ENCODE measurements at regions of chr17 and their contacts with region 1.

Region 1: GRCh38 chr17:78745407-78746088 is 36.5 kb downstream of the CYTH1 start:
- DNase-seq: no peak
- H3K4me3 Mint-ChIP-seq: peak overlapping the region; percentile 53
- H3K27ac Mint-ChIP-seq: peak overlapping the region; percentile 75
- H3K4me1 Mint-ChIP-seq: peaks cover 85% of the 10 kb centered on the region
- H3K27me3 Mint-ChIP-seq: no peaks in the 10 kb centered on the region

Region 2: DNA sequence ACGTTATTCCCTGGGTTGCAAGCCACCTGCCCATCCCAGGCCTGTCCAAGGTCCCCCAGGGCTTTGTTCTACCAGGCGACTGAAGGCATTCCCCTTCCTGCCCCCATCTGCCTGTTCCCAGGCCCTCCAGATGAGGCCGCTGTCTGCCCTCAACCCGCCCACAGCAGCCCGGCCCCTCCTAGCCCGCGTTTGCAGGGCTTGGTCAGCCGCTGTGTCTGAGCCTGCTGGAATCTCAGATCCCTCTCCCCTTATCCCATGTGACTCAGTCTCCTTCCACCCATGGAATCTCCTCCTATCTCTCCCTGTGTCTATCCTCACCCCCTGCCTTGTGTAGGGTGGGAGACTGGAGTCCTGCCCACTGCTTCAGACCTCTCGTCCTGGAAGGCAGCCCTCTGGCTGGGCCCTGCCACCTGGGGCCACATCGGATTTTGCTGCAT is 973.1 kb before region 1 on chr17:
- intact Hi-C with region 1: no loop called
- DNase-seq: peak; percentile 45
- H3K4me3 Mint-ChIP-seq: no peak overlapping the region
- H3K27ac Mint-ChIP-seq: no peak overlapping the region
- H3K4me1 Mint-ChIP-seq: no peaks in the 10 kb centered on the region
- H3K27me3 Mint-ChIP-seq: peaks cover 30% of the 10 kb centered on the region

Region 3: DNA sequence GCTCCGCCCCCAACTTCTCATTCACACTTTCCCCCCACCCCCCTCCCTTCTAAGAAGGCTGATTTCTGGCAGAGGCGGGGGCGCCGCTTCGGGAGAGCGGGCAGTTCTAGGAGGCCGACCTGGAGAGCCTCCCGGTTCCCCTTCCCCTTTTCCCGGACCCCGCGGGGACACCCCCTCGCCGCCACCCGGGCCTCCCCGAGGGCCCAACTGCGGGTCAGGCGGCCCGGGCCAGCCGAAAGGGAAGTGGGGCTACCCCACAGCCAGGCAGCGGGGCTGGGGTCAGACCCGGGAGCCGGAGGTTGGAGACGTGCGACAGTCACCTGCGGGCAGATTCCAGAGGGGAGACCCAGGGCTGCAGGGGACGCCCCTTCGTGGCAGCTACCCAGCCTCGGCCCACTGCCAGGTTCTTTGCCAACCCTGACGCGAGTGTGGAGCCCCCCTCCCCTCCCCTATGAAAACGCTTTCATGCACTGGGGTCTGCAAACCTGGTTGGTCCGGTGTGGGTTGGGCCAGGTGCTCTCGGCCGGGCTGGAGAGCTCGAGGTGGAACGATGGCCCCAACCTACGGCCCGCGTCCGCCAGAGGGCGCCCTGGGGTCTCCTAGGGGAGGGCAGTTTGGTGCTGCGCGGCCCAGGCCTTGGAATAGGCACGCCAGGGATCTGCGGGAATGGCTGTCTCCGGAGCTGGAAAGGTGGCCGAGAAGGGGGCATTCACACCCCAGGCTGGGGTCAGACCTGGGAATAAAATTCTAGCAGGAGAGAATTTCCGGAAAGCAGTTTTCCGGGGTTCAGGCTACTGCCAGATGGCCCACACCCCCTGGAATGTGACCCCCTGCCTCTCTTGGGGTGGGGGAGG is 384.9 kb before region 1 on chr17:
- intact Hi-C with region 1: loop called (anchors 1 kb)
- DNase-seq: peak; percentile 87
- H3K4me3 Mint-ChIP-seq: peak overlapping the region; percentile 79
- H3K27ac Mint-ChIP-seq: peak overlapping the region; percentile 85
- H3K4me1 Mint-ChIP-seq: peaks cover 48% of the 10 kb centered on the region
- H3K27me3 Mint-ChIP-seq: no peaks in the 10 kb centered on the region

Region 4: DNA sequence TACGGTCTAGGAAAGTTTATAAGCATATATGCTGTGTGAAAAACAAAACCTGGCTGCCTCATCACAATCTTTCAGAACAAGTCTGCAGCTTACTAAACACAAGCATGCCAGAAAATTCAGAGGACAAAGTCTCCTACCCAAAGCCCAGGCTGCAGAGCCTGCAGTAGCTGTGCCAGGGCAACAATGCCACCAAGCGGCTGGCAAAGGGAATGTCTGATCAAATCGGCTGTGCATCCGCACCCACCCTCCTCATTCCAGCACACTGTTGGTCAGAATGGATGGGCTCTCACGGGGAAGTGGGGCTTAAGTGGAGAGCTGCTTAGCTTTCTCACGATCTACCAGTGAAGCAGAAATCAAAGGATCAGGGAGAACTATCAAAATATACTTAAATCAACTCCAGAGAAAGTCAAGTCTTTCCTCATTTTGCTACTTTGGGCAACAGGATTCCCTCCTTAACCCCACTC is 37.0 kb before region 1 on chr17:
- intact Hi-C with region 1: loop called (anchors 1 kb)
- DNase-seq: peak; percentile 35
- H3K4me3 Mint-ChIP-seq: peak overlapping the region; percentile 55
- H3K27ac Mint-ChIP-seq: peak overlapping the region; percentile 84
- H3K4me1 Mint-ChIP-seq: peaks cover 56% of the 10 kb centered on the region
- H3K27me3 Mint-ChIP-seq: no peaks in the 10 kb centered on the region

Region 5: GRCh38 chr17:78759203-78759968 is 13.8 kb after region 1 on chr17:
- intact Hi-C with region 1: loop called (anchors 1 kb)
- DNase-seq: peak; percentile 61
- H3K4me3 Mint-ChIP-seq: peak overlapping the region; percentile 61
- H3K27ac Mint-ChIP-seq: peak overlapping the region; percentile 91
- H3K4me1 Mint-ChIP-seq: peaks cover 65% of the 10 kb centered on the region
- H3K27me3 Mint-ChIP-seq: no peaks in the 10 kb centered on the region

Region 6: DNA sequence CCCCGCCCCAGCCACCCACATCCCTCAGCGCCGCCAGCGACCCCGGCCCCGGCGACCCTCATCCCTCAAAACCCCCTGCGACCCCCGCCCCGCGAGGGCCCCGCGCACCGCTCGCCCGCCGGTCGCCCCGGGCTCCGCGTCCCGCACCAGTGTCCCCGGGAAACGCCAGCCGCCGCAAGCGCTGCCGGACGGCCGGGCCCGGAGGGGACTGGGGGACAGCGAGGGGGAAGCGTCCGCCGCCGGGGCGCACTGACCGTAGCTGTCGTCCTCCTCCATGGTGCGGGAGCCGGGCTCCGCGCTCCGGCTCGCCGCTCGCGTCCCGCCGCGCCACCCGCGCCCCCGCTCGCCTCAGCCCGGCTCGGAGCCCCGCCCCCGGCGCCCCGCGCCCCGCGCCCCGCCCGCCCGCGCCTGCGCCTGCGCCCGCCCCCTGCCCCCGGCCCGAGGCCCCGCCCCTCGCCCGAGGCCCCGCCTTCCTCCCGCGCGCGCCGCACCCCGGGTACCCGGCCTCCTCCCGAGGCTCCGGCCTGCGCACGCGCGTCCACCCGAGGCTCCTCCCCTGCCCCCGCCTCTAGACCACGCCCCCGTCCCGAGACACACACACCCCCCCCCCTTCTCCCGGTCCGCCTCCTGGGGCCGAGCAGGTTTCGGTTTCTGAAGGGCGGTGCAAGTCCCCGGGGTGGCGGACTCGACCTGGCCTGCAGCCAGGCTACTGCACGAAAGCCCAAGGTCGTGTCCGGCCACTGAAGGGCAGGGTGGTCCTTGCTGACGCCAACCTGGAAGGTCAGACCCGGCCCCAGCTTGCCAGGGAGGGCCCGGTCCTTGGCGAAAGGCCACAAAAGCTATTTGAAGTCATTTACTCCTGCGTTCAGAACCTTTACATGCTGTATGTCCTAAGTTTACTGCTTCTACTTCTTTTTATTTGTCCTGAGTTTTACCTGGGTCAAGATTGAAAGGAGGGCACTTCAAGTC is 36.7 kb after region 1 on chr17 and contains the start of gene CYTH1:
- intact Hi-C with region 1: loop called (anchors 1 kb)
- DNase-seq: peak; percentile 96
- H3K4me3 Mint-ChIP-seq: peak within 1 kb of the TSS; percentile 90
- H3K27ac Mint-ChIP-seq: peak within 1 kb of the TSS; percentile 91
- H3K4me1 Mint-ChIP-seq: peaks cover 51% of the 10 kb centered on the region
- H3K27me3 Mint-ChIP-seq: no peaks in the 10 kb centered on the region
- total RNA-seq, gene CYTH1: 147 TPM in 2 replicates

Region 7: DNA sequence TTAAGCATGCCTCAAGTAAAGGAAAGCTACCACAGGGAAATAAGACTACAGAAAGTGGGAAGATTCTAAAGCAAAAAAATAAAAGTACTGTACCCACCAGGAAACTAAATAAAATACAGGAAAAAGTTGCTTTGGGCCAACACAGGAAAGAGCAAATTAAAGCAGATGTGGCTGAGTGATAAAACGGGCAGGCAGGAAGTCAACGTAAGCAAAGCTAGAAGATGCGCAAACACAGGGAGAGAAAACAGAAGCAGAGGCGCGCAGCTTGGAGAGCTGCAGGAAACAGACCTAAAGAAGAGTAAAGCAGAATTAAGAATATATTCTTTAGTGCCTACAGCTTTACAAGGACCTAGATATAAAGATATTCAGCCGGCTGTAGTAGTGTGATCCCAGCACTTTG is 73.4 kb after region 1 on chr17:
- intact Hi-C with region 1: loop called (anchors 1 kb)
- DNase-seq: peak; percentile 64
- H3K4me3 Mint-ChIP-seq: peak overlapping the region; percentile 74
- H3K27ac Mint-ChIP-seq: peak overlapping the region; percentile 91
- H3K4me1 Mint-ChIP-seq: peaks cover 53% of the 10 kb centered on the region
- H3K27me3 Mint-ChIP-seq: no peaks in the 10 kb centered on the region